Posterior vena cava (tissue), 2 donors: ENCODE measurements at regions of chr6 and their contacts with region 1.

Region 1: GRCh38 chr6:30599625-30600324 is 17.3 kb downstream of the PPP1R10 start:
- DNase-seq: peak; percentile 13

Region 2: DNA sequence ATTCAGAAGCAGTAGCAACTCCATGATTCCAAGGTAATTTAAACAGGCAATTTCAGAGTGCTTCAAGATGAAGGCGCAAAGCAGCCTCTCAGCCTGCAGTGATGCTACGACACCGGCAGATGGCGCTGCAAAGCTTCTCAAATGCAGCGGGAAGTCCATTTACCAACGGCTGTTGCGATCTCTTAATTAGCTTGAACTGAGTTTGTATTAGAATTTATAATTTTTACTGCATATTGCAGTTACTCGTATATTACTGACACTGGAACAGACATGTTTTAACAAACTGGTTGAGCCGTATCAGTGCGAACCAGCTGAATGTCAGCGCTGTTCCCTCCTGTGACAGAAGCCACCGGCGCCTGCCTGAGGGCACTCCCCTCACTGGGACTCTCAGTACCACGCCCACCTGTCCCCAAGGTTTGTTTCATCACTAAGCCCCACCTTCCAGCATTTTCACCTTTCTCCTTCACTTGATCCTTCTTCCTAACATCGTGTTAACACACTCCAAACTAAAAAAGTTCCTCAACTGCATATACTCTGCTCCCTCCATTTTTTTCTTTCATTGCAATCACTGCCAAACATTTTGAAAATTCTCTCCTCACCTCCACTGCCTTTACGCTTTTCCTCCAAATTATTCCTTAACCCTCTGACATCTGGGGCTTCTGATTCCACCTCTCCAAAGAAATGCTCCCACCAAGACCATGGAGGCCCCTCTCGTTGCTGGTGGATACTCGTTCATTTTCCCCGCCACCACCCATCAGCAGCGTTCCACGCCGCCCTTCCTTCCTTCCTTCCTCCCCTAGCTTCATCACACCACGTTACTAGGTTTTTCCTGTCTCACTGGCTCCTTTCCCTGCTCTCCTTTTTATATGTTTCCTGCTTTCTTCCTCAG is 58.0 kb before region 1 on chr6:
- intact Hi-C with region 1: loop called in 1 of 2 experiments (anchors 5 kb)
- DNase-seq: peak; percentile 86